ENCODE measurements at regions of chr14 and their contacts with region 1.

Region 1: DNA sequence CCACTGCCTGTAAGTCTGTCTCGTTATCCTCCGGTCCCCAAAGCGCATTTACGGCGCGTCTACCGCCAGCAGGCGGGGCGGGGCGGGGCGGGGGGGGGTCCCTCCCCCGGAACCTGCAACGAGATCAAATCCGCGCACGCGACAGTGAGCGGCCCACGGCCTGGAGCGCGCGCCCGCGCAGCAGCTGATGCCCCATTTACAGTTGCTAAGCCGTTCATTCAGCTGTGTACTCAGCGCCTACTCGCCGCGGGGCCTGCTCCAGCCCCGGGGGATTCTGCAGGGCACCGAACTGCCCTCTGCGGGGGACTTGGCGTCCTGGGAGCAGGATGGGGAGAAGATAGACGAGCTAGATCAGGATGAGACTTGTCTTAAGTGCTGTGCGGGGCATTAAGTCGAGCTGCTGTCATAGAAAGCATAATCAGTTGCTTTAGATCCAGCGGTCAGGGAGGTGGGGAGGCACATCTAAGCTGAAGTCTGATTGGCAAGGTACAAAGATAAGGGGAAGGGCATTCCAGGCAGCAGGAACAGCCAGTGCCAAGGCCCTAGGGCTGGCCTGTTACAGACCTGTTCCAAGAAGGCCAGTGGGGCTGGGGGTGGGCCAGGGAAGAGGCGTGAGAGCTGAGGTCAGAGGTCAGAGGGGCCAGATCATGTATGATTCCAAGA is 1.4 kb upstream of the CCDC85C start:
- DNase-seq: peak; percentile 64
- CTCF ChIP-seq: no peak

Region 2: DNA sequence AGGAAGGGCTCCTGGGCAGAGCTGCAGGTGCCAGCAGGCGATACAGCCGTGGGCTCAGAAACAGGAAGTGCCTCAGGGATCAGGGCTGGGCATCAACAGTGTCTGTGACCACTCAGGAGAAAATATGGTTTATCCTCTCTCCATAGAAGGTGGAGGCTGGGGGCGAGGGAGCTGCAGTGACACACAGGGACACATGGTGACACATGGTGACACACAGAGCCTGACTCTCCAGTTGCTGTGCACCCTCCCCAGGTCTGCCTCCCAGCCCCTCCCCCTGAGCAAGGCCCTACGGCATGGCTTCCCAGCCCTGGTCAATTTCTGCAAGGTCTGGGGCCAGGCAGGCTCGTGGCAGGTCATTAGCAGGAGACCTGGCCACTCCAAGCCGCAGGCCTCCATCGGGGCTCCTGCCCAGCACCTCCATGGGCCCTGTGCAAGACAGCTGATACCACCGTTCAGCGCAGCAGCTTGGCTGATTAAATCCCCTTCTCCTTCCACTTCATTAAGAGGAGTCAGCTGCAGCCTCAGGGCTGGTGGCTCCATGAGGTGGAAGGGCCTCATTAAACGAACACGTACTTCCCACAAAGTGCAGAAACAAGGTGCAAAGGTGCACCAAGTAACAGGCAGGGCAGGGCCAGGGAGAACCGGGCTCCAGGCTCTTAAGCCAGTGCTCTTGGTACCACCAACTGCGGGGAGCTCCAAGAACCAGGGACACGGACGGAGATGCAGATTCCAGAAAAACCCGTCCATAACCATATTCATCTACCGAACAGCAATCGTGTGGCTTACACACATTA is 63.6 kb before region 1 on chr14:
- CTCF ChIA-PET with region 1: no interaction called
- POLR2A ChIA-PET with region 1: no interaction called
- DNase-seq: no peak
- CTCF ChIP-seq: no peak

Region 3: GRCh38 chr14:99563233-99564129 is 41.9 kb before region 1 on chr14:
- CTCF ChIA-PET with region 1: no interaction called
- POLR2A ChIA-PET with region 1: no interaction called
- DNase-seq: no peak
- CTCF ChIP-seq: no peak

Region 4: DNA sequence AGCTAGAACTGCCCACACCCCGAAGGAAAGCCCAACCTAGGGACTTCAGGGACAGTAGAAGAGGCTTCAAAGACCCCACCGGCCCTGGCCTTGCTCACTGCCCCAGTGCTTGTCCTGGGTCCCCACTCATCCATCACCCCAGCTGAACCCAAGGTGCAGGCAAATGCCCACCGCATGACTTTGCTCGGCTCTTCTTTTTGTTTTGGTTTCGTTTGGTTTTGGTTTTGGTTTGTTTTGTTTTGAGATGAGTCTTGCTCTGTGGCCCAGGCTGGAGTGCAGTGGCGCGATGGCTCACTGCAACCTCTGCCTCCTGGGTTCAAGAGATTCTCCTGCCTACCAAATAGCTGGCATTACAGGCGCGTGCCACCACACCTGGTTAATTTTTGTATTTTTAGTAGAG is 10.4 kb before region 1 on chr14:
- CTCF ChIA-PET with region 1: interaction called, 11 read pairs
- POLR2A ChIA-PET with region 1: interaction called, 3 read pairs
- DNase-seq: peak; percentile 67
- CTCF ChIP-seq: no peak

Region 5: DNA sequence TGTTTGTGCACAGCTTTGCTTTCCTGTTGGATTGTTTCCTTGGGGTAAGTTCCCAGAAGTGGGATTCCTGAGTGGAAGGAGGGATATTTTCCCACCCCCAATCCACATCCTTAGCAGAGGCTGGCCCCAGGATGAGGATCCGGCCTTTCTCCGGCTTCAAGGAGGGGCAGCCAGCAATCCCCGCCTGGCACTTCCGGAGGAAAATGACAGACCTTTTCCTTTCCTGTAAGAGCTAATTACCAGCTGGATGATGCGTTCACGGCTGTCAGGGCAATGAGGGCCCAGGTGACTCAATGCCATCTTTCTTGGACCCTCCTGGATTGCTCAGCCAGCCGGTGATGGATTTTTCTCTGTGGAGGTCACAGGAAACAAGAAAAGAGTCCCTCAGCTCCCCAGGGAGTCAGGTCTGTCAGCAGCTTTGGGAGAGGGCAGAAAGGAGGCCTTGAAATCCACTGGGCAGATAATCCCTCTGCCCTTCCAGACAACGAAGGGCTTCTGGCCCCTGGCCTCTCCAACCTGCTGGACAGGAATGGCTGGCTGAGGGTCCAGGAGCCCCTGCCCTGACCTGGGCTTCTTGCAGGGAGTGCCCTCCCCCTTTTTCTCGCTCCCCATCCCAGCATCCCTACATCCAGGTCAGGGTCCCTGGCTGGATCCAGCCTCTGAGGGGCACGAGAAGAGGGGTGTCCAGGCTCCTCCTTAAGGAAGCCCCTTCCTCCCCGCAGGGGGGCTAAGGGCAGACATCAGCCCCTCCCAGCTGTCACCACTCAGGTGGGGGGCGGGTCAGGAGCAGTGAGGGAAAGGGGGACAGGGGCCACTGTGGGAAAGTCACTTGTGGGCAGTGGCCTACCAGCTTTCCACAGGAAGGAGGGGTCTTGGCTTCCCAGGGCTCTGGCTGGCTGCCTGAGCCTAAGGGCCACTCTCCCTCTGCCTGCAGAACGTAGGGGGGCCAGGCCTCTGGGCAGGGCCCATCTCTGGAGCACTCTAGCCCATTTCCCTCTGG is 14.7 kb after region 1 on chr14:
- CTCF ChIA-PET with region 1: interaction called, 13 read pairs
- POLR2A ChIA-PET with region 1: no interaction called
- DNase-seq: no peak
- CTCF ChIP-seq: no peak